ENCODE measurements at regions of chr11 and their contacts with region 1.

Region 1: GRCh38 chr11:58567889-58568512 is 7.7 kb downstream of the LPXN start:
- DNase-seq: peak; percentile 83
- H3K4me3 ChIP-seq: no peak overlapping the region
- H3K27ac ChIP-seq: no peak overlapping the region
- H3K4me1 ChIP-seq: no peaks in the 10 kb centered on the region
- H3K27me3 ChIP-seq: no peaks in the 10 kb centered on the region
- CTCF ChIP-seq: peak; percentile 93

Region 2: DNA sequence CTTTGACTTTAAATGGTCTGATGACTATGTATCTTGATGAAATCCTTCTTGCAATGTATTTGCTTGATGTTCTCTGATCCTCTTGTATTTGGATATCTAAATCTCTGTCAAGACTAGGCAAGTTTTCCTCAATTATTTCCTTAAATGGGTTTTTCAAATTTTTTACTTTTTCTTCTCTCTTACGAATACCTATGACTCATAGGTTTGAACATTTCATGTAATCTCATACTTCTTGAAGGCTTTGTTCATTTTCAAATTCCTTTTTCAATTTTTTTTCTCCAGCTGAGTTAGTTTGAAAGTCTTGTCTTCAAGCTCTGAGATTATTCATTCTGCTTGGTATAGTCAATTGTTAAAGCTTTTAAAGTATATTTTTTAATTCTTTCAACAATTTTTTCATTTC is 313.1 kb before region 1 on chr11:
- CTCF ChIA-PET with region 1: no interaction called
- POLR2A ChIA-PET with region 1: no interaction called
- intact Hi-C with region 1: no loop called
- DNase-seq: no peak
- H3K4me3 ChIP-seq: no peak overlapping the region
- H3K27ac ChIP-seq: no peak overlapping the region
- H3K4me1 ChIP-seq: no peaks in the 10 kb centered on the region
- H3K27me3 ChIP-seq: no peaks in the 10 kb centered on the region
- CTCF ChIP-seq: no peak

Region 3: DNA sequence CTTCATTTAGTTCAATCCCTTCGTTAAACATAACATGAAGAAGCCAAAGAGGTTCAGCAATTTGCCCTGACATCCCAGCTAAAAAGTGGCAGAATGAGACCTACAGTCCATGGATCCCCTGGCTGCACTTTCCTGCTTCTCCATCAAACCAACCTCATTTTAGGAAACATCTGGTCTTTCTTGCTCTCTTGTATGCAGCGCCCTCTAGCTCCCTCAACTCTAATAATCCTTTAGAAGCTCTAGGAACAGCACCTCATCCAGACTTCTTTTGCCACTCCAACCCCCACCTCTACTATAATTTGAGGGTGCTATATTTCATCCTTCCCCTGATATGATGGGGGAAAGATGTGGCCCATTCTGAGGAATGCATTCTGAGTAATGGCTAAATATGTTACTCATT is 61.9 kb after region 1 on chr11:
- CTCF ChIA-PET with region 1: interaction called, 8 read pairs
- POLR2A ChIA-PET with region 1: no interaction called
- intact Hi-C with region 1: loop called (anchors 5 kb)
- DNase-seq: peak; percentile 78
- H3K4me3 ChIP-seq: no peak overlapping the region
- H3K27ac ChIP-seq: no peak overlapping the region
- H3K4me1 ChIP-seq: no peaks in the 10 kb centered on the region
- H3K27me3 ChIP-seq: no peaks in the 10 kb centered on the region
- CTCF ChIP-seq: peak; percentile 83

Measured in A673 (cell line).